ENCODE measurements at regions of chr6 and their contacts with region 1.

Region 1: GRCh38 chr6:33169291-33170175 is 22.7 kb downstream of the COL11A2 start:
- DNase-seq: no peak
- ATAC-seq: no peak
- H3K4me3 ChIP-seq: no peak overlapping the region
- H3K27ac ChIP-seq: no peak overlapping the region
- H3K4me1 ChIP-seq: no peaks in the 10 kb centered on the region
- H3K27me3 ChIP-seq: no peaks in the 10 kb centered on the region
- CTCF ChIP-seq: no peak

Region 2: GRCh38 chr6:33112148-33112547 is 57.4 kb before region 1 on chr6:
- intact Hi-C with region 1: no loop called
- DNase-seq: no peak
- ATAC-seq: peak; percentile 76 to 91 (median 90)
- H3K4me3 ChIP-seq: no peak overlapping the region
- H3K27ac ChIP-seq: no peak overlapping the region
- H3K4me1 ChIP-seq: no peaks in the 10 kb centered on the region
- H3K27me3 ChIP-seq: peaks cover 0 to 76% (median 5%) of the 10 kb centered on the region in 3 donors
- CTCF ChIP-seq: no peak

Region 3: GRCh38 chr6:33191383-33192104 is 22.0 kb after region 1 on chr6:
- intact Hi-C with region 1: loop called in 1 of 2 experiments (anchors 1 kb)
- DNase-seq: peak in 1 of 2 donors; percentile 62
- ATAC-seq: peak; percentile 36 to 54 (median 47)
- H3K4me3 ChIP-seq: no peak overlapping the region
- H3K27ac ChIP-seq: no peak overlapping the region
- H3K4me1 ChIP-seq: peaks cover 19% of the 10 kb centered on the region
- H3K27me3 ChIP-seq: no peaks in the 10 kb centered on the region
- CTCF ChIP-seq: no peak

Region 4: DNA sequence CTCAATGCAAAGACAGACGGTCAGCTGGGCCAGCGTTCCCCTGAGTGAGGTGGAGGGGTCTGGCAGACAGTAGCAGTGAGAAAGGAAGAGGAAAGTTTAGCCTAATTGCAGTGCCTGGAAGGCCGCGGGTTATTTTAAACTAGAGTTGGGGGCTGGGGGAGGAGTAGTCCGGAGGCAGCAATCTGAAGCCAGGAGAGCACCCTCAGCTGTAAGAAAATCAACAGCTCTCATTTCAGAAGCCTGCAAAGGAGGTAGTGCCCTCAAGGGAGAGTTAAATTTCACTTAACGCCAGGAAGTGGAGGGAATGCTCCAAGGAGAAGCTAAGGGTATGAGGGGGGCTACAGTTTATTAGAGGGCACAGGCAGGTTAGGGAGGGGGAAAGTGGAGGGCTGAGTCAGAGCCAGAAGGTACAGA is 65.7 kb after region 1 on chr6:
- intact Hi-C with region 1: loop called in 1 of 2 experiments (anchors 5 kb)
- DNase-seq: no peak
- ATAC-seq: no peak
- H3K4me3 ChIP-seq: no peak overlapping the region
- H3K27ac ChIP-seq: no peak overlapping the region
- H3K4me1 ChIP-seq: no peaks in the 10 kb centered on the region
- H3K27me3 ChIP-seq: peaks cover 0 to 16% (median 4%) of the 10 kb centered on the region in 3 donors
- CTCF ChIP-seq: no peak

Measured in psoas muscle (tissue), 8 donors.